Panc1 (cell line): ENCODE measurements at regions of chr12 and their contacts with region 1.

Region 1: GRCh38 chr12:131415781-131416180 is 295.1 kb upstream of the SFSWAP start:
- DNase-seq: no peak
- ATAC-seq: 0 out of 2 replicates have a peak, but pooled peaks have one; percentile 50
- H3K4me3 ChIP-seq: no peak overlapping the region
- H3K27ac ChIP-seq: no peak overlapping the region
- H3K4me1 ChIP-seq: no peaks in the 10 kb centered on the region
- H3K27me3 ChIP-seq: peaks cover 2% of the 10 kb centered on the region; the same call in 1 of the 2 replicates
- CTCF ChIP-seq: no peak

Region 2: DNA sequence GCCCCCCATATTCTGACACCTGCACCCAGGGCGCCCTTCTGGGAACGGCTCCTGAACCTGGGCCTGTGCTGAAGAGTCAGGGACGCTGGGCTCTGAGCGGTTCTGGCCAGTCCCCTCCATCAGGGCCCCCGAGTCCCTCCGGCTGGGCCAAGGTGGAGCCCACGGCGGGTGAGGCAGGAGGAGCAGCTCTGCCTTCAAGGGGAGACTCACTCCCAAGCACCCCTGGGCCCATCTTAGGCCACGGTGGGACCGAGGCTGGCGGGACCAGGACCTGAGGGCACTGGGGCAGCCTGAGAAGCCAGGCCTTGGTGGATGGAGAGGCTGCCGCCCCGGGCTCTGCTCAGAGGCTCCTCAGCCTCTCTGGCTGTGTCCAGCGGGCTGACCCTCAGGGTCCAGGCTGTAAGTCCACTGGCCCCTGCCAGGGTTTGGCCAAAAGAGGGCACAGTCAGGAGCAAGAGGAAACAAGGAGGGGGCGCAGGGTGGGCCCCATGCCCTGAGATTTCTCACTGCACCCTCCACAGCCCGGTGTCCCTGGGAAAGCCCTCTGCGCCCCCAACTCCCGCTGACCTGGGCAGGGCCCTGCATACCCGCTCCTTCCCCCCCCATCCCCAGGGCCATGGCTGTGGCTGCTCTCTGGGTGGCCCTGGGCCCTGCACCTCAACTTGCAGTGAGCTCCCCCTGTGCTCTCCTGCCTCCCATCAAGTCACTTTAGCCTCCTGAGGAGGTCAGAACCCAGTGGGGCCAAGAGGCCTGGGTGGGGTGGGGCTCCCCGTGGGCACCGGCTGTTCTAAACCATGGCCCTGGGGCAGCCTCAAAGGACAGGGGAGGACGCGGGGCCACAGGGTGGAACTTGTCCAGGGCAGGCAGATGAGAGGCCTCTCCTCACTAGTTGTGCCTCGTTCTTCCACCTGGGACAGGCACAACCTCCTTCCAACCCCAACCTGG is 28.7 kb after region 1 on chr12:
- CTCF ChIA-PET with region 1: no interaction called
- POLR2A ChIA-PET with region 1: interaction called, 12 read pairs
- in situ Hi-C with region 1: no loop called
- intact Hi-C with region 1: no loop called
- DNase-seq: no peak
- ATAC-seq: no peak
- H3K4me3 ChIP-seq: no peak overlapping the region
- H3K27ac ChIP-seq: no peak overlapping the region
- H3K4me1 ChIP-seq: no peaks in the 10 kb centered on the region
- H3K27me3 ChIP-seq: no peaks in the 10 kb centered on the region
- CTCF ChIP-seq: no peak